K562 (cell line): ENCODE measurements at regions of chr17 and their contacts with region 1.

Region 1: GRCh38 chr17:77076124-77076872 is 64.5 kb upstream of the SEC14L1 start:
- DNase-seq: no peak
- ATAC-seq: peak; percentile 47
- H3K4me3 ChIP-seq: no peak overlapping the region
- H3K27ac ChIP-seq: no peak overlapping the region
- H3K4me1 ChIP-seq: peaks cover 10 to 14% of the 10 kb centered on the region in 2 experiments; a peak in 4 of 5 replicates
- H3K27me3 ChIP-seq: no peaks in the 10 kb centered on the region
- CTCF ChIP-seq: no peak
- EP300 ChIP-seq: no peak
- POLR2A ChIP-seq: no peak
- RAD21 ChIP-seq: no peak

Region 2: DNA sequence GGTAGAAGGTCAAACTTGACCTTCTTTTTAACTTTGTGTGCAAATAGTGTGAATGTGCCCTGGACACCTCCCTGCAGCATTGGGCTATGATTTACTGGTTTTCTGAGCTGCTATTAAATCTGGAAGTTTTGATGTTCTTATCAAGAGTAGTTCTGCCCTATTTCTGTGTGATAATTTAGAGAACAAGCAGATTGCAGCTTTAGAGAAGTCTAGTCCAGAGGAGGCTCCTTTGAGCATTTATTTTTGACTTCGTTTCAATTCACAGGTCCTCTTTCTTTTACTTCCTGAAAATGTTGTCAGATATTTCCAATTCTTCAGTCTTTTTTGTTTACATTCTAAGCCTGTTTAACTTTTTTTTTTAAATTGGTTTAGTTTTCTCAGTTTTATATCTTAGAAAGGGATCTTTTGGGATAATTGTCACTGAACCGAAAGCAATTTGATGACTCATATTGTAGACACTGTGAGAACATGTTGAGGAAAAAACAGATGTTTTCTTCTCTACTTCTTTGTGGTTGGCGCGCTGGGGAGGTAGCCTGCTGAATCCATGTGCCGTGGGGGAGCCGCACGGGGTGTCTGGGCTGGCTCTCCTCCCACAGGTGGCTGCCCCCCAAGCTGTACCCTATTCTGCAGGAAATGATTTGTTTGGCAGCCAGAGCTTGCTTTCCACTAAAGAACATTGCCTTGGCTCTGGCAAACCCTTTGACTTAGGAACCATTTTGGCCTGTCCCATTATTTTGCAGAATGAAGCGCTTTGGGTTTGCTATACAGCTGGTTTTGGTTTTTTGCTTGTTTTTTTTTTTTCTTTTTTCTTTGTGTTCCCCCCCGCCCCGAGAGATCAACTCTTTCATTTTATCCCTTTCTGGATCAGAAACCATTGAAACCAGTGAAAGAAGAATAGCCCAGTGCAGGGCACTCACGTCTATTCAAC is 285.0 kb before region 1 on chr17:
- CTCF ChIA-PET with region 1: no interaction called
- POLR2A ChIA-PET with region 1: no interaction called
- in situ Hi-C with region 1: no loop called
- intact Hi-C with region 1: loop called (anchors 10 kb)
- DNase-seq: peak; percentile 57 to 81 (median 74)
- ATAC-seq: peak; percentile 76
- H3K4me3 ChIP-seq: no peak overlapping the region
- H3K27ac ChIP-seq: peak overlapping the region; percentile 40; the same call in 1 of the 3 replicates
- H3K4me1 ChIP-seq: peaks cover 18 to 31% of the 10 kb centered on the region in 2 experiments
- H3K27me3 ChIP-seq: no peaks in the 10 kb centered on the region
- CTCF ChIP-seq: no peak
- EP300 ChIP-seq: peak; percentile 3; the same call in 1 of the 2 replicates
- POLR2A ChIP-seq: no peak
- RAD21 ChIP-seq: no peak

Region 3: GRCh38 chr17:77019955-77020379 is 56.3 kb before region 1 on chr17:
- CTCF ChIA-PET with region 1: no interaction called
- POLR2A ChIA-PET with region 1: no interaction called
- in situ Hi-C with region 1: no loop called
- intact Hi-C with region 1: no loop called
- DNase-seq: no peak
- ATAC-seq: no peak
- H3K4me3 ChIP-seq: no peak overlapping the region
- H3K27ac ChIP-seq: no peak overlapping the region
- H3K4me1 ChIP-seq: no peaks in the 10 kb centered on the region
- H3K27me3 ChIP-seq: peaks cover 12 to 28% of the 10 kb centered on the region in 2 experiments
- CTCF ChIP-seq: no peak
- EP300 ChIP-seq: no peak
- POLR2A ChIP-seq: no peak
- RAD21 ChIP-seq: no peak